AG04450 (cell line): ENCODE measurements at regions of chr3 and their contacts with region 1.

Region 1: DNA sequence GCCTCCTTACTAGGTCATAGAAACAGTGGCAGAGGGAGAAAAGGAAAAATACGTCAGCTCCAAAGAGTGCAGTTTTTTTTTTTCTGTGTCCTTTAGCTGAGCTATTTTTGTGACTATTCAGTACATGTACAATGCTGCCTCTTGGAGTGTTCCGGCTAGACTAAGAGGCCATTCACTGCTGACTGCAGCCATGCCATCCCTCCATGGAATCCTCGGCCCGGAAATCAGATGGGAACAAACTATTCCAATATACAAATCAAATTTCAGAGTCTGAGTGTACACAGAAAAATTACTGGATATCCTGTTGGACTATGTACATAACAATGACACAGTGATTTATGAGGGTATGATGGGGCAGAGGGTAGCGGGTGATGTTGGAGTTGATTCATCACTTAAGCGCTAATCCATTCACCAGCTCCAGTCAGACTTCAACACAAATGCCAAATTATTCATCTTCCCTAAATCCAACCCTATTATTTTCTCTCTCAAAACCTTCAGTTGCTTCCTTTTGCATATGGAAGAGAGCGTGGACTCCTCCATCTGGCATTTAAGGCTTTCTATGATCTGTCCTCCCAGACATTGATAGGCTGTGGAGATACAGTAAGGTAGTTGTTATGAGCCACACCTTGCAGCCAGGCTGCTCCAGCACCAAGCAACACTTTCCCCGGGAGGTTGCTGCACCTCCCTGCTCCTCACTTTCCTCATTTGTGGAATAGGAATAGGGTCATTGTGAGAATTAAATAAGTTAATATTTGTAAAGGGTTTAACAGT is 109.1 kb downstream of the LPP start:
- DNase-seq: no peak
- H3K4me3 ChIP-seq: no peak overlapping the region
- H3K27ac ChIP-seq: peak overlapping the region; percentile 39
- H3K27me3 ChIP-seq: no peaks in the 10 kb centered on the region
- CTCF ChIP-seq: no peak

Region 2: DNA sequence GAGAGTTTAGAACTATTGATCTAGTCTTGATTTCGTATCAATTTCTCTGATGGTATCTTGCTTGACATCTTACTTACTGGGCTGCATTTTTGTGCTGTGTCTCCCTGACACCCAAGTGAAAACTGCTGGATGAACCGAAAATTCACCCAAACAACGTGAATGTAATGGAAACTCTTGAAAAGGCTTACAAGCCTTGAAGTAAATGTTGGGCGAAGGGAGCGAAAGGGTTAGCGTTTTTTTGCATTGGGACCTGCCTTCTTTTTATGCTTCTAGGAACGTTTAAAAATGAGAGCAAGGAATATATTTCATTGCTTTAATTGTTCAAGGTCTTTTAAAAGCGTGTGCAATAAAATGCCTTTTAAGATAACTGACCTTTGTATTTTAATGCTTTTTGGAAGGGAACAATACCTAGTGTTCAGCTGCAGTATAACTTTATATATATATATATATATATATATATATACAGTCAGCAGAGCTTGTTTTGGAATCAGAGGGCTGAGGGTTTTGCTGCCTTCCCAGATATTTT is 15.0 kb before region 1 on chr3:
- CTCF ChIA-PET with region 1: interaction called, 4 read pairs
- POLR2A ChIA-PET with region 1: interaction called, 10 read pairs
- DNase-seq: no peak
- H3K4me3 ChIP-seq: no peak overlapping the region
- H3K27ac ChIP-seq: no peak overlapping the region
- H3K27me3 ChIP-seq: no peaks in the 10 kb centered on the region
- CTCF ChIP-seq: no peak

Region 3: GRCh38 chr3:188348435-188349244 is 85.5 kb after region 1 on chr3:
- CTCF ChIA-PET with region 1: no interaction called
- POLR2A ChIA-PET with region 1: no interaction called
- DNase-seq: peak; percentile 45
- H3K4me3 ChIP-seq: no peak overlapping the region
- H3K27ac ChIP-seq: no peak overlapping the region
- H3K27me3 ChIP-seq: no peaks in the 10 kb centered on the region
- CTCF ChIP-seq: no peak